K562 (cell line): ENCODE measurements at regions of chr12 and their contacts with region 1.

Region 1: DNA sequence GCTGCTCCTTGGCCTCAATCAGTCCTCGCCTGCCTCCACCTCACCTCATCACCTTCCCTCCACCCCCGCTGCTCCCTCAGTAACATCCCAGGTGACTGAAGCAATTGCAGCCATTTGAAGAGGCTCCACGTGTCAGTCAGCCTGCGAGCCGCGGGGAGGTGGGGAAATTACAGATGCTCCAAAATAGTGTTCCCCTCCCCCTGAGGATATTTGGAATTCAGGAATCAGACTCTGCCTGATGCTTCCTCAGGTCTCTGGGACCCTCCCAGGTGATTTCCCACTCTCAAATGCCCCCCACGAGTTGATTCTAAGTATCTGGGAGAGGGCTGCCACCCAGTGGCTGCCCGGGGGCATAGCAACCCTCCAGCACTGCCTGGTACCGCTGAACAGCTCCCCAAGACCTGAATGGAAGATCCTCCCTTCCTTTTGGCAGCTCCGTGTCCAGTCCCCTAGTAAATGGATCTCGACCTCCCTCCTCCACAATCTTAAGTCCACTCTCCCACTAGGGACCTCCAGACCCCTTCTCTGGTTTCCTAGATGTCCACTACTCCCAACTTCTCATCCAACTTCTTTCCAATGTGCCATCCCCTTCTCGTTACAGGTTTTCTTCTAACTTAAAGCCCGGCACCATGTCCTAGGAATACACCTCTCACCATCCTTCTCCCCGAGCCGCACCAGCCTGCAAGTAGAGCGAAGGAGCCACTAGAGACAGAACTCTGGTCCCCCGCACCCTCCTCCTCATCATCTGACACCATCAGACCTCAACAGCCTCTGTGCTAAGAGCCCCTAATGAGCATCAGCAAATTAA is 1.4 kb upstream of the ASIC1 start:
- DNase-seq: peak; percentile 65 to 77 (median 74)
- ATAC-seq: peak; percentile 70
- H3K4me3 ChIP-seq: no peak overlapping the region
- H3K27ac ChIP-seq: no peak overlapping the region
- H3K4me1 ChIP-seq: peaks cover 18 to 38% of the 10 kb centered on the region in 2 experiments
- H3K27me3 ChIP-seq: peaks cover 17 to 60% of the 10 kb centered on the region in 2 experiments; a peak in 4 of 5 replicates
- CTCF ChIP-seq: peak; percentile 88 to 99 (median 93)
- EP300 ChIP-seq: no peak
- POLR2A ChIP-seq: no peak
- RAD21 ChIP-seq: peak; percentile 96 to 97

Region 2: GRCh38 chr12:50043854-50044253 is 12.2 kb before region 1 on chr12:
- CTCF ChIA-PET with region 1: interaction called, 31 read pairs
- POLR2A ChIA-PET with region 1: interaction called, 14 read pairs
- in situ Hi-C with region 1: no loop called
- intact Hi-C with region 1: loop called (anchors 1 kb)
- DNase-seq: no peak
- ATAC-seq: no peak
- H3K4me3 ChIP-seq: no peak overlapping the region
- H3K27ac ChIP-seq: no peak overlapping the region
- H3K4me1 ChIP-seq: peaks cover 35 to 38% of the 10 kb centered on the region in 2 experiments
- H3K27me3 ChIP-seq: no peaks in the 10 kb centered on the region
- CTCF ChIP-seq: no peak
- EP300 ChIP-seq: no peak
- POLR2A ChIP-seq: no peak
- RAD21 ChIP-seq: no peak

Region 3: DNA sequence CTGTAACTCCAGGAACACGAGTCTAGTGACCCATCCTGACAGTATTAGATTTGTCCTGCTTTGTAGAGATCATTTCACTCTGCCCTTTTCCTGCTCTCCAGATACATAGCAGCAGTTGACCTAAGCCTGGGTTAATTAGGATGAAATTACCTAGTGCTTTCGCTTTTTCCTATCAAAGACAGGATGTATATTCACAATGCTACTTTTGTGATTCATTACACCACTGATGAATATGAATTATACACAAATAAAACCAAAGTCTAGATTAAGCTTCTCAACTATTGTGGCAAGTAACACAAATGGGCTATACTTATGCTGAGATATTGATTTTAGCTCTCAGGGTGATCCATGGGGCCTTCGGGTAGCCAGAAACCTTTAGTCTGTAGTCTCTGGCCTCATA is 93.3 kb after region 1 on chr12:
- CTCF ChIA-PET with region 1: no interaction called
- POLR2A ChIA-PET with region 1: no interaction called
- in situ Hi-C with region 1: no loop called
- intact Hi-C with region 1: no loop called
- DNase-seq: no peak
- ATAC-seq: no peak
- H3K4me3 ChIP-seq: no peak overlapping the region
- H3K27ac ChIP-seq: no peak overlapping the region
- H3K4me1 ChIP-seq: peaks cover 0 to 4% of the 10 kb centered on the region in 2 experiments; a peak in 1 of 5 replicates
- H3K27me3 ChIP-seq: no peaks in the 10 kb centered on the region
- CTCF ChIP-seq: no peak
- EP300 ChIP-seq: no peak
- POLR2A ChIP-seq: no peak
- RAD21 ChIP-seq: no peak

Region 4: DNA sequence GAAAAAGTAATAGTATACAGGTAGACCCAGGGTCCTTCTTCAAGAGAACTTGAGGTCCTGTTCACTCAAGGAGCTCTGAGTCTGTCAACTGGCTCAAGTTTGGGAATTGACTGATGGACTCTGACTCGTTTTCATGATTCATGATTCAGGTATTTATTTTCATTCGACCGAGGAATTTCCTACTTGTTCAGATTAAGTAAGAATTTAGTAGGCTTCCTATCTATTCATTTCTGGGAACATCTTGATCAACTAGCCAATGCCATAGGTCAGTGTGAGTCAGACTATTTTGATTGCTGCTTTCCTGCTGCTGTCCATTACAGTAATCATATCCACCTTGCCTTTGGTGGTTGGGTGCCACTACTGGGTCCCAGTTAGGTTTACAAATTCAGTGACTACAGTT is 334.2 kb after region 1 on chr12:
- CTCF ChIA-PET with region 1: no interaction called
- POLR2A ChIA-PET with region 1: no interaction called
- in situ Hi-C with region 1: no loop called
- intact Hi-C with region 1: no loop called
- DNase-seq: no peak
- ATAC-seq: no peak
- H3K4me3 ChIP-seq: no peak overlapping the region
- H3K27ac ChIP-seq: no peak overlapping the region
- H3K4me1 ChIP-seq: peaks cover 0 to 5% of the 10 kb centered on the region in 2 experiments; a peak in 2 of 5 replicates
- H3K27me3 ChIP-seq: no peaks in the 10 kb centered on the region
- CTCF ChIP-seq: no peak
- EP300 ChIP-seq: no peak
- POLR2A ChIP-seq: no peak
- RAD21 ChIP-seq: no peak